AG04450 (cell line): ENCODE measurements at regions of chr1 and their contacts with region 1.

Region 1: DNA sequence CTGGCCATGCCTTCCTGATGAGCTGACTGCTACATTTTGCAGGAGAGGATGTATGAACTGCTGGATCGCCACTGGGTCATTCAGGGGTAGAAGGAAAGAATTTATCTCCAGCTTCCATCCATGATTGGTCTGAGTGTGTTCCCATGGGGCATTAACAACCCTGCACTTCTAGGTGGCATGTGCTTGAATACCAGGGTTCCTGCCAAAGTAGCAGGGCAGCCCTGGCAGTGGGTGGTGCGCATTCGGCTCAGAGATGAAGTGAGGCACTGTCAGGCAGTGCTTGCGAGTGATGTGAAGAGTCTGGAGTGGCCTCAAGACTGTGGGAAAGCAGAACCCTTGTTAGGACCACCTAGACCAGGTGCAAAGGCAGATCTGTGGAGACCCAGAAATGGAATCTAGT is 294.9 kb downstream of the ASTN1 start:
- DNase-seq: no peak
- H3K4me3 ChIP-seq: no peak overlapping the region
- H3K27ac ChIP-seq: no peak overlapping the region
- H3K27me3 ChIP-seq: no peaks in the 10 kb centered on the region
- CTCF ChIP-seq: no peak

Region 2: DNA sequence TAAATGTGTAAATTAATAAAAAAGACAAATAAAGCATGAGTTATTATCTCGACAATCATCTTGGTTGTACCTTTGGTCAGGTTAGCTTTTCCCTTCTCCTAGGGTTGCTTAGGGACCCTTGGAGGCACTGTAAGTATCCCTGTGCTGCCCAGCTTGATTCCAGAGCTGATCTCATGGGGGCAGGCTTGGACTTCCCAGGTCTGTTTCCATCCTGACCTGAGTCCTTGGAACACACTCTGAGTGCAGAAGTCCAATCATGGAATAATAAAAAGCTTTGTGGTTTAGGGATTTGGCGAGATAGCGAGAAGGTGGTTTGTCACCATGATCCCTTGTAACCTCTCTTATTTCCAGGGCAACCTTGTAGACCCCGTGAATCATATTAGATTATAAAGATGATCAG is 425.3 kb before region 1 on chr1:
- CTCF ChIA-PET with region 1: no interaction called
- POLR2A ChIA-PET with region 1: no interaction called
- DNase-seq: no peak
- H3K4me3 ChIP-seq: no peak overlapping the region
- H3K27ac ChIP-seq: no peak overlapping the region
- H3K27me3 ChIP-seq: no peaks in the 10 kb centered on the region
- CTCF ChIP-seq: no peak

Region 3: DNA sequence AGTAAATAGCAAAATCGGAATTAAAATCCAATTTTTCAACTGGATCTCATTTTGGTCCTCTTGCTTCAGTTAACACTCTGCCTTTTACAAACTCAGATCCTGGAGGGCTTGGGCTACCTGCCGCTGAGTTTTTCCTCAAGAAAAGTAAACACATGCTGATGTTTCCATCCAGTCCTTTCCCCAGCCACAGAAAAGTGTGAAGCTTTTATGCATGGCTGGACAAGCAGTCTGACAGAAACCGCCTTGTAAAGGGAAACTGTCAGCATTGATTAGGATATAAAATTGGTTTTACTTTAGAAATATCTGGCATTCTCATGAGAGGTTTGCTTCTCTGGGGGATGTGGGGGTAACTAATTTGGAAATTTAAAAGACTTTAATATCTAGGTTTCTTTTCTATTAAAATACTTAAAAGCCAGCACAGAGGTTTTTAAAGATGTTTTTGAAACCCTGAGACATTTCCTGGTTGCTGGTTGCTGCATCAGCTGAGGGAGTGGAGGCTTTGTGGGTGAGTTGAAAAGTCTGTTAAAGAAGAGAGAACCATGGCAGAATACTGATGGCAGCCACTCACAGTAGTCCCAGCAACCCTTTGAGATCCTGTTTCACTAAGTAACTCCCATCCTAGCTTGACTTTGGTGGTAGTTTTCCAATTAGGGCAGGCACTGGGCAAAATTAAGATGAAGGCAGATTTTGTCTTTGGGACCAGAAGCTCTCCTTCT is 168.3 kb before region 1 on chr1:
- CTCF ChIA-PET with region 1: no interaction called
- POLR2A ChIA-PET with region 1: no interaction called
- DNase-seq: no peak
- H3K4me3 ChIP-seq: no peak overlapping the region
- H3K27ac ChIP-seq: no peak overlapping the region
- H3K27me3 ChIP-seq: no peaks in the 10 kb centered on the region
- CTCF ChIP-seq: no peak

Region 4: GRCh38 chr1:176880954-176881595 is 11.5 kb after region 1 on chr1:
- CTCF ChIA-PET with region 1: interaction called, 16 read pairs
- POLR2A ChIA-PET with region 1: no interaction called
- DNase-seq: peak; percentile 45
- H3K4me3 ChIP-seq: no peak overlapping the region
- H3K27ac ChIP-seq: no peak overlapping the region
- H3K27me3 ChIP-seq: no peaks in the 10 kb centered on the region
- CTCF ChIP-seq: peak; percentile 83